Naive thymus-derived CD4-positive, alpha-beta T cell (primary cell): ENCODE measurements at regions of chr7 and their contacts with region 1.

Region 1: GRCh38 chr7:15305002-15305600 is 256.7 kb downstream of the AGMO start:
- DNase-seq: no peak
- ATAC-seq: no peak
- H3K4me3 ChIP-seq: no peak overlapping the region
- H3K4me3 Mint-ChIP-seq: no peak overlapping the region
- H3K27ac ChIP-seq: no peak overlapping the region
- H3K27ac Mint-ChIP-seq: no peak overlapping the region
- H3K4me1 ChIP-seq: no peaks in the 10 kb centered on the region
- H3K4me1 Mint-ChIP-seq: no peaks in the 10 kb centered on the region
- H3K27me3 ChIP-seq: no peaks in the 10 kb centered on the region
- H3K27me3 Mint-ChIP-seq: no peaks in the 10 kb centered on the region

Region 2: DNA sequence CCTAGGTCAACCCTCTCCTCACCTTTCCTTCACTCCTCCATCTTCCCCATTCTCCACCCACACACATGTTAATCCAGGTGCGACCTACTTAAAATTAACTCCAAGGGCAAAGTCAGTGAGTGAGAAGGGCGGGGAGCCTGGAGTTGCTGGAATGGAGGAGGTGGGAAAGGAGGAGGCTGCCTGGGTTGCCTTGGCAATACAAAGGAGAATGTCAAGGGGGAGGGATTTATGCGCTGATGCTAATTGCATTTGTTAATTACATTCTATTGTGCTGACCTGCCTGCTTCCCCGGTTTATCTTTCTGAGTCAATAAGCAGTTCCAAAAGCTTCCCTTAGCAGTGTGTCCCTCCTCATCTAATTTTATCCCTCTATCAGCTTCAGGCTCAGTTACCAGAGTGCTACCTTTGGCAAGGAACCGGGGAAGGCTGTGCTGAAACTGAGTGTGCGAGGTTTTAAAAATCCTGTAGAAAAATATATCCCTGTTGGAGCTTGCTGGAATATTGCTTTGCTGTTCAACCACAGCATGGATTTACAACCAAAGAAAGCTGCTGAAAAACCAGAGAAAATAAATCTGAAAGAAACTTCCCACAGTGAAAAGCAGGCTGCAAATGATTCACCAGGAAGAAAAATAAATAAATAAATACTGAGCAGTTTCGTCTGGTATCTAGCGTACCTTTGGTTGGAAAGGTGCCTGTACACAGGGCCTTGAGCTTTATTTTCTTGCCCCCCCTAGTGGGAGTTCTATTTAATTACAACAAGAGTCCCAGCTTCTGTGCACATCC is 289.4 kb before region 1 on chr7:
- CTCF ChIA-PET with region 1: no interaction called
- POLR2A ChIA-PET with region 1: no interaction called
- intact Hi-C with region 1: no loop called
- DNase-seq: peak in 2 of 9 donors; percentile 4 to 8
- ATAC-seq: no peak
- H3K4me3 ChIP-seq: no peak overlapping the region
- H3K4me3 Mint-ChIP-seq: no peak overlapping the region
- H3K27ac ChIP-seq: no peak overlapping the region
- H3K27ac Mint-ChIP-seq: no peak overlapping the region
- H3K4me1 ChIP-seq: no peaks in the 10 kb centered on the region
- H3K4me1 Mint-ChIP-seq: no peaks in the 10 kb centered on the region
- H3K27me3 ChIP-seq: no peaks in the 10 kb centered on the region
- H3K27me3 Mint-ChIP-seq: no peaks in the 10 kb centered on the region

Region 3: DNA sequence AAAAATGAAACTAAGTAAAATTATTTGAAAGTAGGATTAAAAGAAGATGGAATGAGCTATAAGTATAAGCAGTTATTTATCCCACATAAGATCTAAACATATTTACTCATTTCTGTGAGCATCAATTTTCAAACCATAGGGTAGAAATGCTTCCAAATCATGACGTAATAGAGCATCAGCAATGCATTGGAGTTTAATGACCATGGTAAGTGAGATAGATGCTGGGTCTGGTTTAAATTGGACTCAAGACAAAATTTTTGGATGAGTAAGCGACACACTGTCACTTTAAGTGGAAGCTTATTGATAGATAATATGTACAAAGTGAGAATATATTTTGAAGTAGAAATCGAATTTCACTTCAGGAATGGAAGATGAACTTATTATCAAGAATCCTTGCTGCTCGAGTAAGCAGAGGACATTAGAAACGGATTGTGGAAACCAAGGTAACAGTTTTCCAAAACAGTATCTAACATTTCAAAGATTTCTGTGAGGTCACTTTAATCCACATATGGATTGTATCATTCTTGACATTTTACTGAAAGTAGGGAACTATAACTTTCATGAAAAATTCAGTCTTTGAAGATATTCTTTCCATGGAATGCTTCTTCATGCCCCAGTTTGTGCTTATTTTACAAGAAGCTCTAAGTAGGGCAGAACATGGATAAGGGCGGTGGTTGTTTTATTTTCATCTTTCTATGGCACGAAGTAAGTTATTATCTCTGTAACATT is 170.9 kb after region 1 on chr7:
- CTCF ChIA-PET with region 1: no interaction called
- POLR2A ChIA-PET with region 1: no interaction called
- intact Hi-C with region 1: no loop called
- DNase-seq: no peak
- ATAC-seq: no peak
- H3K4me3 ChIP-seq: no peak overlapping the region
- H3K4me3 Mint-ChIP-seq: no peak overlapping the region
- H3K27ac ChIP-seq: no peak overlapping the region
- H3K27ac Mint-ChIP-seq: no peak overlapping the region
- H3K4me1 ChIP-seq: no peaks in the 10 kb centered on the region
- H3K4me1 Mint-ChIP-seq: no peaks in the 10 kb centered on the region
- H3K27me3 ChIP-seq: no peaks in the 10 kb centered on the region
- H3K27me3 Mint-ChIP-seq: no peaks in the 10 kb centered on the region

Region 4: DNA sequence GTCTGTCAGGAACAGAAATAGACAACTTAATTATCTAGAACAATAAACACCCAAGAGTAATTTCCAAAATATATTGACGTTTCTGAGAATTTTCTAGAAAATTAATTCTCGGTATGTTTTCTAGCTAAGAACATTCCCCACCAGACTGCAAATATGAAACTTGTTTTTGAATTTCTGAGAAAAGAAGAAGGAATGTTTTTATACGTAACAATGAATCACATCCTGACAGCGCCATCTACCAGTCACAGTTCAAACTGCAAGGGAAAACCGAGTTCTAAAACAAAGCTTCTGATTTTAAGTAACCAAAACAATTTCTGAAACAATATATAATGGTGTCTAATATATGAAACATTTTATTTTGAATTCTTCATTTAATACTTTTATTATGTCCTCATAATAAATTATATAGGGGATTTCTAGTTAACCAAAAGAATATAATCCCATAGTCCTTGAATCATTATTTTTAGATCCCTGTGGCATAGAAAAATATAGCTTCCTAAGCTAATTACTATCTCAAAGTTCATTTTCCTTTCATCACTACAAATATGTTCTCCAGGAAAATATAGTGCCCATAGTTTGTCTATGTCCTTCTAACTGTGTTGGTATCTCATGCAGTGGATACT is 415.9 kb after region 1 on chr7:
- CTCF ChIA-PET with region 1: no interaction called
- POLR2A ChIA-PET with region 1: no interaction called
- intact Hi-C with region 1: loop called in 1 of 2 experiments (anchors 10 kb)
- DNase-seq: no peak
- ATAC-seq: no peak
- H3K4me3 ChIP-seq: no peak overlapping the region
- H3K4me3 Mint-ChIP-seq: no peak overlapping the region
- H3K27ac ChIP-seq: no peak overlapping the region
- H3K27ac Mint-ChIP-seq: no peak overlapping the region
- H3K4me1 ChIP-seq: no peaks in the 10 kb centered on the region
- H3K4me1 Mint-ChIP-seq: no peaks in the 10 kb centered on the region
- H3K27me3 ChIP-seq: no peaks in the 10 kb centered on the region
- H3K27me3 Mint-ChIP-seq: no peaks in the 10 kb centered on the region

Region 5: GRCh38 chr7:16071246-16071857 is 766.3 kb after region 1 on chr7:
- CTCF ChIA-PET with region 1: no interaction called
- POLR2A ChIA-PET with region 1: no interaction called
- intact Hi-C with region 1: loop called in 1 of 2 experiments (anchors 10 kb)
- DNase-seq: peak in 5 of 9 donors; percentile 20 to 41 (median 26)
- ATAC-seq: peak; percentile 49
- H3K4me3 ChIP-seq: no peak overlapping the region
- H3K4me3 Mint-ChIP-seq: no peak overlapping the region
- H3K27ac ChIP-seq: no peak overlapping the region
- H3K27ac Mint-ChIP-seq: no peak overlapping the region
- H3K4me1 ChIP-seq: no peaks in the 10 kb centered on the region
- H3K4me1 Mint-ChIP-seq: no peaks in the 10 kb centered on the region
- H3K27me3 ChIP-seq: no peaks in the 10 kb centered on the region
- H3K27me3 Mint-ChIP-seq: peaks cover 0 to 16% (median 11%) of the 10 kb centered on the region in 5 donors